ENCODE measurements at regions of chr15 and their contacts with region 1.

Region 1: GRCh38 chr15:40274350-40275274 is 8.3 kb downstream of the ANKRD63 start:
- DNase-seq: peak; percentile 79 to 94 (median 88)
- ATAC-seq: peak; percentile 91
- H3K4me3 ChIP-seq: no peak overlapping the region
- H3K4me3 Mint-ChIP-seq: no peak overlapping the region
- H3K27ac ChIP-seq: no peak overlapping the region
- H3K27ac Mint-ChIP-seq: no peak overlapping the region
- H3K4me1 ChIP-seq: no peaks in the 10 kb centered on the region
- H3K4me1 Mint-ChIP-seq: peaks cover 5% of the 10 kb centered on the region
- H3K27me3 ChIP-seq: no peaks in the 10 kb centered on the region
- H3K27me3 Mint-ChIP-seq: peaks cover 12% of the 10 kb centered on the region
- CTCF ChIP-seq: peak; percentile 100

Region 2: DNA sequence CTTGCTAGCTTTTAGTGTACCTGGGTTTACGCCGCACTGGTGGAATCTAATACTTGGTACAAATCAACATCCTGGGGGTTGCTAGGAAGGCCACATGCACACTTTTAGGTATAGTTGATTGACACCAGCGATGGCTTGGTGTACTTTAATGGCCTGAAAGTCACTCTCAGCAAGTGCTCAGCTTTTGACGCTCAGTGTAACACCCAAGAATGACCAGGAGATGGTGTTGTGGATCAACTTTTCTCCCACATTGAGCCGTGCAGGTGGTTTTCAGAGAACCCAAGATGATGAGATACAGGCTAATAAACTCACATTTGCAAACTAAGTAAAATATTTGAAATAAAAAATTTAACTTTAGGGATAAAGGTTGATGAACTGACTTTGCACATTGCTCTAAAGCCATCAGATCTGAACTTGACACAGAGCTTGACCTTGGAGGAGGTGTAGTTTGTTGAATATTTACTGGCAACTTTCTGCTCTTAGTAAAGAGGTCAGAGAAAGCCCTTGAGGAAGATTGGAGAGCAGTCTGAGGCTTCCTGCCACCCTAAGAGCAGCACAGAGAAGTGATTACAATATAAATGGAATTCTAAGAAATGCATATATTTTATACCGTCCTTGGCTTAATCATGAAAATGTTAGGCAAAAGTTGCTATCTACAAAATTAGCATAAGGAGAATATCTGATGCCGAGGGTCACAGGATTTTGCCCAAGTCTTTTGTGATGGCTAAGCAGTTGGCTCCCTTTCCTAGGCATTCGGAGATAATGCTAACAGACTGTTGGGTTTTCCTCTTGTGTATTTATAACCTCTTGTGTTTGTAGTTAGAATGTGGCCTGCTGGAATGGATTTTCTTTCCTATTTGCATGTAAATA is 1566.6 kb before region 1 on chr15:
- CTCF ChIA-PET with region 1: no interaction called
- POLR2A ChIA-PET with region 1: no interaction called
- intact Hi-C with region 1: loop called in 1 of 2 experiments (anchors 5 kb)
- DNase-seq: peak in 5 of 9 experiments; percentile 30 to 71 (median 40)
- ATAC-seq: peak; percentile 89
- H3K4me3 ChIP-seq: no peak overlapping the region
- H3K4me3 Mint-ChIP-seq: no peak overlapping the region
- H3K27ac ChIP-seq: no peak overlapping the region
- H3K27ac Mint-ChIP-seq: no peak overlapping the region
- H3K4me1 ChIP-seq: no peaks in the 10 kb centered on the region
- H3K4me1 Mint-ChIP-seq: no peaks in the 10 kb centered on the region
- H3K27me3 ChIP-seq: no peaks in the 10 kb centered on the region
- H3K27me3 Mint-ChIP-seq: no peaks in the 10 kb centered on the region
- CTCF ChIP-seq: peak; percentile 73

Region 3: GRCh38 chr15:40038638-40039543 is 235.7 kb before region 1 on chr15 and contains the start of gene SRP14:
- CTCF ChIA-PET with region 1: interaction called, 108 read pairs
- POLR2A ChIA-PET with region 1: no interaction called
- intact Hi-C with region 1: no loop called
- DNase-seq: peak; percentile 86 to 96 (median 93)
- ATAC-seq: peak; percentile 94
- H3K4me3 ChIP-seq: peak within 1 kb of the TSS; percentile 92 to 99
- H3K4me3 Mint-ChIP-seq: peak within 1 kb of the TSS; percentile 99
- H3K27ac ChIP-seq: peak within 1 kb of the TSS; percentile 84 to 96
- H3K27ac Mint-ChIP-seq: peak within 1 kb of the TSS; percentile 99
- H3K4me1 ChIP-seq: peaks cover 16% of the 10 kb centered on the region
- H3K4me1 Mint-ChIP-seq: peaks cover 43% of the 10 kb centered on the region
- H3K27me3 ChIP-seq: no peaks in the 10 kb centered on the region
- H3K27me3 Mint-ChIP-seq: no peaks in the 10 kb centered on the region
- CTCF ChIP-seq: no peak
- total RNA-seq, gene SRP14: 133 to 135 TPM

Region 4: GRCh38 chr15:40204100-40204499 is 70.5 kb before region 1 on chr15:
- CTCF ChIA-PET with region 1: interaction called, 15 read pairs
- POLR2A ChIA-PET with region 1: no interaction called
- intact Hi-C with region 1: no loop called
- DNase-seq: no peak
- ATAC-seq: no peak
- H3K4me3 ChIP-seq: no peak overlapping the region
- H3K4me3 Mint-ChIP-seq: no peak overlapping the region
- H3K27ac ChIP-seq: no peak overlapping the region
- H3K27ac Mint-ChIP-seq: no peak overlapping the region
- H3K4me1 ChIP-seq: no peaks in the 10 kb centered on the region
- H3K4me1 Mint-ChIP-seq: peaks cover under 1% of the 10 kb centered on the region
- H3K27me3 ChIP-seq: no peaks in the 10 kb centered on the region
- H3K27me3 Mint-ChIP-seq: no peaks in the 10 kb centered on the region
- CTCF ChIP-seq: no peak

Region 5: GRCh38 chr15:40256638-40257235 is 17.9 kb before region 1 on chr15:
- CTCF ChIA-PET with region 1: interaction called, 51 read pairs
- POLR2A ChIA-PET with region 1: no interaction called
- intact Hi-C with region 1: no loop called
- DNase-seq: peak in 2 of 9 experiments; percentile 67 to 76
- ATAC-seq: peak; percentile 67
- H3K4me3 ChIP-seq: no peak overlapping the region
- H3K4me3 Mint-ChIP-seq: no peak overlapping the region
- H3K27ac ChIP-seq: peak overlapping the region in 1 of 2 experiments; percentile 63
- H3K27ac Mint-ChIP-seq: peak overlapping the region; percentile 52
- H3K4me1 ChIP-seq: peaks cover 11% of the 10 kb centered on the region
- H3K4me1 Mint-ChIP-seq: peaks cover 11% of the 10 kb centered on the region
- H3K27me3 ChIP-seq: peaks cover 0 to 3% of the 10 kb centered on the region in 2 experiments
- H3K27me3 Mint-ChIP-seq: peaks cover 20% of the 10 kb centered on the region
- CTCF ChIP-seq: no peak

Region 6: GRCh38 chr15:40323239-40323952 is 48.8 kb after region 1 on chr15 and contains the start of gene INAFM2:
- CTCF ChIA-PET with region 1: interaction called, 541 read pairs
- POLR2A ChIA-PET with region 1: no interaction called
- intact Hi-C with region 1: loop called in 1 of 2 experiments (anchors 1 kb)
- DNase-seq: peak; percentile 79 to 97 (median 93)
- ATAC-seq: peak; percentile 90
- H3K4me3 ChIP-seq: peak within 1 kb of the TSS; percentile 34 to 45
- H3K4me3 Mint-ChIP-seq: peak within 1 kb of the TSS; percentile 80
- H3K27ac ChIP-seq: peak within 1 kb of the TSS in 1 of 2 experiments; percentile 47
- H3K27ac Mint-ChIP-seq: peak within 1 kb of the TSS; percentile 74
- H3K4me1 ChIP-seq: peaks cover 21% of the 10 kb centered on the region
- H3K4me1 Mint-ChIP-seq: peaks cover 22% of the 10 kb centered on the region
- H3K27me3 ChIP-seq: no peaks in the 10 kb centered on the region
- H3K27me3 Mint-ChIP-seq: no peaks in the 10 kb centered on the region
- CTCF ChIP-seq: peak; percentile 60
- total RNA-seq, gene INAFM2: 4.3 to 8.1 TPM

Measured in CD8-positive, alpha-beta T cell (primary cell).